AG04449 (cell line): ENCODE measurements at regions of chr7 and their contacts with region 1.

Region 1: DNA sequence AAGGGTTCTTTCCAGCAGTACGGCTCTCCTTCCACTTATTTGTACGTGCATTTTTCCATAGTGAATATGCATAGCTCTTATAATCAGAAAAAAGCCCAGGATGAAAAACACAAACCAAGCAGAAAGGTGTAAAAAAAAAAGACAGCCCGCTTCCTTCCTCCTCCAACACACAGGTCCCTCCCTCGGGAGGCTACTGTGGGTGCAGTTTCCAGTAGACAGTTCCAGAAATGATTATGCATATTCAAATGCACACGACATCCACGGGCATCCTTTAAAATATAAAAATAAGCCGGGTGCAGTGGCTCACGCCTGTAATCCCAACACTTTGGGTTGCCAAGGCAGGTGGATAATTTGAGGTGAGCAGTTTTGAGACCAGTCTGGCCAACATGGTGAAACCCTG is 59.9 kb downstream of the TNRC18 start:
- DNase-seq: no peak
- H3K4me3 ChIP-seq: no peak overlapping the region
- CTCF ChIP-seq: no peak

Region 2: GRCh38 chr7:5375925-5376324 is 12.2 kb after region 1 on chr7:
- CTCF ChIA-PET with region 1: interaction called, 29 read pairs
- POLR2A ChIA-PET with region 1: no interaction called
- DNase-seq: no peak
- H3K4me3 ChIP-seq: no peak overlapping the region
- CTCF ChIP-seq: no peak

Region 3: GRCh38 chr7:5423844-5424688 is 60.3 kb after region 1 on chr7:
- CTCF ChIA-PET with region 1: interaction called, 19 read pairs
- POLR2A ChIA-PET with region 1: interaction called, 4 read pairs
- DNase-seq: peak; percentile 92
- H3K4me3 ChIP-seq: peak overlapping the region; percentile 86
- CTCF ChIP-seq: no peak

Region 4: GRCh38 chr7:5450549-5451372 is 87.0 kb after region 1 on chr7:
- CTCF ChIA-PET with region 1: interaction called, 63 read pairs
- POLR2A ChIA-PET with region 1: no interaction called
- DNase-seq: no peak
- H3K4me3 ChIP-seq: no peak overlapping the region
- CTCF ChIP-seq: peak; percentile 59

Region 5: DNA sequence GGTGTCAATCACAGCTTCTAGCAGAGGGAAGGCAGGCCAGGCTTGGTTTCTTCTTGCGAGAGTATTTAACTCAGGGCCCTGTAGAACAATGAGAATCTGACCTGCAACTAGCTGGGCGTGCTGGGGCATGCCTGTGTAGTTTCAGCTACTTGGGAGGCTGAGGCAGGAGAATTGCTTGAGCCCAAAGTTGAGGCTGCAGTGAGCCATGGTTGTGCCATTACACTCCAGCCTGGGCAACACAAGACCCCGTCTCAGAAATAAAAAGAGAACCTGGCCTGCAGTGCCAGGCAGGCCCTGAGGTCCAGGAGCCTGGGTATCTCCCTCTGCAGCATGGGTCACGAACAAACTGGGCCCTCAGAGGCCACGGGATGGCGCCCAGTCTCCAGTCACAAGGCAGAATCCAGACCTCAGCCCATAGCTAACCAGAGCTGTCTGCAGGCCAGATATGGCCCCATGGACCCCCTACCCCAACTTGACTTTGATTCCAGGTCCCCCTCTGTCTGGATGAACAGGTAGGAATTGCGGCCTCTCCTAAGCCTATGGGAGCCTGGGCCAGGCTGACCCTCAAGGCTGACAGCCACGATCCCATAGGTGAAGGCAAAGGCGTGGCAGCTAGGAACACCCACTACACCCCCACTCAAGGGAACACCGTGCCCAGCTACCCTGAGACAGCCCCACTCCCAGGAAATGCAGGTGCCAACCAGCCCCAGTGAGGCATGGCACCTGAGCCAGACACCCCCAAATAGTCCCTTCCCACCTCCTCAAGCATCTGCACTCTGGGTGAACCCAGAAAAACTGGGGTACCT is 162.6 kb after region 1 on chr7:
- CTCF ChIA-PET with region 1: no interaction called
- POLR2A ChIA-PET with region 1: no interaction called
- DNase-seq: no peak
- H3K4me3 ChIP-seq: peak overlapping the region; percentile 94
- CTCF ChIP-seq: no peak